PC-9 (cell line): ENCODE measurements at regions of chr1 and their contacts with region 1.

Region 1: DNA sequence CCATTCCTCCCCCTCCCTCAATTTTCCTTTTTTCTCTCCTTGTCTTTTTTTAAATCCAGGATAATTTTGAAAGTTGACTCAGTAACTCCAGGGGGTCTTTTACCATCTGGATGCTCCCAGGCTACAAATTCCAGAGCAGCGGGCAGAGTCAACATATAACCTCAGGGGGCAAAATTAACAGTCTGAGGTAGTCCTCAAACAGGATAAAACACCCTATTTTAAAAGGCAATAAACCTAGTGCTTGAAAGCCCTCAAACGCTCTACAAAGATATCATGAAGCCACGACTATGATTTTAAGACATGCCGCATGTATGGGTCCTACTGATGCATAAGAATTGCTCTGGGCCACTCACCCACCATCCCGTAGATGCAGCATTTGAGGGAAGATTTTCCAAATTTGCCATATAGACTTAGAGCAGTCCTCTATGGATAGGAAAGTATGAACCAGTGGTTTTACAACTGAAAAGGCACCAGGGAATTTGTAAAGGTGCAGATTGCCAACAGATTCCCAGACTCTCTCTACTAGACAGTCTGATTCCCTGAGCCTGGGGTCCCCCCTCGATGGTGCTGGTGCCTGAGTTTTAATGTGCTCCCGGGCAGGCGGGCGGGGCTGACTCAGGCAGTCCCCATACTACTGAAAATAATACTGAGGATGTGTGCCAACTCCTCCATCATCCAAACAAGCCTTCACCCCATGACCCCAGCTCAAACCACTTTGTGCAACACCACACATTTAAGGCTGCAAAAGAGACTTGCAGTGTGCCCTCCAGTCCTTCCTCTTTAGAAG is 37.2 kb downstream of the PTPN14 start:
- DNase-seq: no peak
- H3K4me3 ChIP-seq: no peak overlapping the region
- H3K27ac ChIP-seq: no peak overlapping the region
- H3K4me1 ChIP-seq: peaks cover 55% of the 10 kb centered on the region
- H3K27me3 ChIP-seq: no peaks in the 10 kb centered on the region
- CTCF ChIP-seq: no peak

Region 2: DNA sequence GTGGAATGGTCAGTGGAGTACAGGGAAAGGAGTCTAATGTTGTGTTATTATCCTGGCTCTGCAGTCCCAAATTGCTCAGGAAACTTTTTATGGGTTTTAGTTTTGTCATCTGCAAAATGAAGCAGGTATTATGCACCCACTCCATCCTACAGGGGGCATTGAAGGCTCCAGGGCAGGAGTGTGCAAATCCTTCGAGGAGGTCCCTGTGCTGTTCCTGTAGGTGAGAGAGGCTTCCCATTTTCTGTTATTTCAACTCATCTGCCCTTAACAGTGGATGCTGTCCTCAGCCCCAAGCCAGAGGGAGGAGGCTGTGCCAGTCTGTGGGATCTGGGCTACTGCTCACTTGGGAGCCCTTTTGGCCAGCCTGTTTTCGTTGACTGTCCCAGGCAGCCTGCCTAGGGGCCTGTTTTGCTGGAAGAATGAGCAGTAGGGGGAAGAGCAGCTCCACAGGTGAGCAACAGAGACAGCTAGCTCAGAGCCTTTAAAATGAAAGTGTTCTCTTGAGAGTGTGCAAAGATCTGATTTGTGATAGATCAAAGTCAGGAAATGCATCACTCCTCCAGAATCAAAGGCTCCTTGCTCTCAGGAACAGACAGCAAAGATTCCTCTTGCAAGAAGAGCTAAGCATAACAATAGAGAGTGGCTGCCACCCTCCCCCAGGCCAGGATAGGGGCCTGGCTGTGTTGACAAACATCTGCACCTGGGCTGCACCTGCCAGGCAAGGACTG is 844.1 kb before region 1 on chr1:
- CTCF ChIA-PET with region 1: no interaction called
- POLR2A ChIA-PET with region 1: no interaction called
- intact Hi-C with region 1: no loop called
- DNase-seq: no peak
- H3K4me3 ChIP-seq: no peak overlapping the region
- H3K27ac ChIP-seq: no peak overlapping the region
- H3K4me1 ChIP-seq: no peaks in the 10 kb centered on the region
- H3K27me3 ChIP-seq: no peaks in the 10 kb centered on the region
- CTCF ChIP-seq: no peak

Region 3: DNA sequence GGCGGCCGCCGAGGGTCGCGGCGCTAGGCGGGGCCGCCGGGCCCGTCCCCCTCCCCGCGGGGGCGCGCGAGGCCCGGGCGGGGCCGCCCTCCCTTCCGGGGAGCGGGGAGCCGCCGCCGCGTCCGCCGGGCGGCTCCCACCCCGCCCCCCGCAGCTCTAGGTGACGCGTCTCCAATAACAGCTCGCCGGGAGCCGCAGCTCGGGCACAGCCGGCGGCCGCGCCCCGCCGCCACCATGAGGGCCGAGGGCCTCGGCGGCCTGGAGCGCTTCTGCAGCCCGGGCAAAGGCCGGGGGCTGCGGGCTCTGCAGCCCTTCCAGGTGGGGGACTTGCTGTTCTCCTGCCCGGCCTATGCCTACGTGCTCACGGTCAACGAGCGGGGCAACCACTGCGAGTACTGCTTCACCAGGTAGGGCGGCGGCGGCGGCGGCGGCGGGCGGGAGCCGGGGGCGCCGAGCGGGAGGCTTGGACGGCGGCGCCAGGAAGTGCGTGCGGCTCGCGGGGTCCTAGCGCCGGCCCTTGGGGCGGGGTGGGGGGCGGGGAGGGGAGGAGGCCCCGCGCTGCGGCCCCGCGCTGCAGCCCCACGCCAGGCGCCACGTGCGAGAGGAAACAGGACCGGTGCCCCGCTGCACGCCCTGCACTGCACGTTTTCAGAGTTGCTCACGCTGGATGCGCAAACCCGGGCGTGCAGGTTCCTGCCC is 233.1 kb before region 1 on chr1 and contains the start of gene SMYD2:
- CTCF ChIA-PET with region 1: no interaction called
- POLR2A ChIA-PET with region 1: interaction called, 14 read pairs
- intact Hi-C with region 1: no loop called
- DNase-seq: peak; percentile 51 to 75
- H3K4me3 ChIP-seq: peak within 1 kb of the TSS; percentile 81
- H3K27ac ChIP-seq: peak within 1 kb of the TSS; percentile 71
- H3K4me1 ChIP-seq: peaks cover 33% of the 10 kb centered on the region
- H3K27me3 ChIP-seq: no peaks in the 10 kb centered on the region
- CTCF ChIP-seq: no peak
- total RNA-seq, gene SMYD2: 36.4 and 41.2 TPM in 2 replicates

Region 4: GRCh38 chr1:214349781-214350180 is 164.4 kb before region 1 on chr1:
- CTCF ChIA-PET with region 1: no interaction called
- POLR2A ChIA-PET with region 1: interaction called, 21 read pairs
- intact Hi-C with region 1: no loop called
- DNase-seq: peak in 1 of 2 experiments; percentile 59
- H3K4me3 ChIP-seq: no peak overlapping the region
- H3K27ac ChIP-seq: no peak overlapping the region
- H3K4me1 ChIP-seq: no peaks in the 10 kb centered on the region
- H3K27me3 ChIP-seq: no peaks in the 10 kb centered on the region
- CTCF ChIP-seq: no peak

Region 5: GRCh38 chr1:214427871-214428277 is 86.4 kb before region 1 on chr1:
- CTCF ChIA-PET with region 1: no interaction called
- POLR2A ChIA-PET with region 1: no interaction called
- intact Hi-C with region 1: loop called (anchors 2 kb)
- DNase-seq: peak; percentile 40 to 58
- H3K4me3 ChIP-seq: no peak overlapping the region
- H3K27ac ChIP-seq: peak overlapping the region; percentile 13; the same call in 1 of the 2 replicates
- H3K4me1 ChIP-seq: peaks cover 11% of the 10 kb centered on the region
- H3K27me3 ChIP-seq: no peaks in the 10 kb centered on the region
- CTCF ChIP-seq: no peak

Region 6: GRCh38 chr1:214466403-214467077 is 47.7 kb before region 1 on chr1:
- CTCF ChIA-PET with region 1: no interaction called
- POLR2A ChIA-PET with region 1: no interaction called
- intact Hi-C with region 1: loop called (anchors 1 kb)
- DNase-seq: peak; percentile 26 to 73
- H3K4me3 ChIP-seq: no peak overlapping the region
- H3K27ac ChIP-seq: peak overlapping the region; percentile 52
- H3K4me1 ChIP-seq: peaks cover 27% of the 10 kb centered on the region
- H3K27me3 ChIP-seq: no peaks in the 10 kb centered on the region
- CTCF ChIP-seq: no peak

Region 7: DNA sequence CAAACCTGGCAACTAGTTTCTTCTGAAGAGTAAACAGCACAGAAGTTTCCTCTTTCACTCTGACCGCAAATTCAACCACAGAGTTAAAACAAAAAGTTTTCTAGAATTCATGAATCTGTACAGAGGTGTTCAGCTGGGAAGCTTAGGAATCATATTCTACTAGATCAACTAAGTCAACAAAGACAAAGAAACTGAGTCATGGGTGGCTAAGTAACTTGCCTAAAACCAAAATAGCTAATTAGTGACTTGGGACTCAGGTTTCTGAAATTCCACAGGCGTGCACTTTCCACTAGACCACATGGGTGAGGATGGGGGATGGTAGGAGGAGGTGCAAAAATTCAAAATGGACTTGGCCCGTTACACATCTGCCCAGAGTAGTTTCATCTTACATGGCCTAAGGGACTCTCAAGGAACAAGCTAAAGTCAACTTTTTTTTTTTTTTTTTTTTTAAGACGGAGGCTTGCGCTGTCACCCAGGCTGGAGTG is 11.4 kb after region 1 on chr1:
- CTCF ChIA-PET with region 1: no interaction called
- POLR2A ChIA-PET with region 1: no interaction called
- intact Hi-C with region 1: loop called (anchors 1 kb)
- DNase-seq: peak; percentile 77 to 96
- H3K4me3 ChIP-seq: peak overlapping the region; percentile 4; the same call in 1 of the 2 replicates
- H3K27ac ChIP-seq: peak overlapping the region; percentile 43
- H3K4me1 ChIP-seq: peaks cover 37% of the 10 kb centered on the region
- H3K27me3 ChIP-seq: no peaks in the 10 kb centered on the region
- CTCF ChIP-seq: no peak